IMR-90 (cell line): ENCODE measurements at regions of chr10 and their contacts with region 1.

Region 1: GRCh38 chr10:74322141-74322540 is 171.1 kb downstream of the ADK start:
- DNase-seq: no peak
- ATAC-seq: no peak
- H3K4me3 ChIP-seq: no peak overlapping the region
- H3K27ac ChIP-seq: no peak overlapping the region
- H3K4me1 ChIP-seq: no peaks in the 10 kb centered on the region
- H3K27me3 ChIP-seq: no peaks in the 10 kb centered on the region
- CTCF ChIP-seq: no peak
- POLR2A ChIP-seq: no peak
- RAD21 ChIP-seq: no peak

Region 2: GRCh38 chr10:74377476-74377875 is 55.3 kb after region 1 on chr10:
- CTCF ChIA-PET with region 1: no interaction called
- POLR2A ChIA-PET with region 1: no interaction called
- dilution Hi-C with region 1: no loop called
- in situ Hi-C with region 1: no loop called
- intact Hi-C with region 1: loop called (anchors 5 kb)
- DNase-seq: no peak
- ATAC-seq: no peak
- H3K4me3 ChIP-seq: no peak overlapping the region
- H3K27ac ChIP-seq: no peak overlapping the region
- H3K4me1 ChIP-seq: no peaks in the 10 kb centered on the region; the same call in 1 of the 2 replicates
- H3K27me3 ChIP-seq: no peaks in the 10 kb centered on the region
- CTCF ChIP-seq: no peak
- POLR2A ChIP-seq: no peak
- RAD21 ChIP-seq: no peak